Activated B cell treated with CpG ODN at 0.5 μM for 24 hours (primary cell): ENCODE measurements at regions of chr1 and their contacts with region 1.

Region 1: DNA sequence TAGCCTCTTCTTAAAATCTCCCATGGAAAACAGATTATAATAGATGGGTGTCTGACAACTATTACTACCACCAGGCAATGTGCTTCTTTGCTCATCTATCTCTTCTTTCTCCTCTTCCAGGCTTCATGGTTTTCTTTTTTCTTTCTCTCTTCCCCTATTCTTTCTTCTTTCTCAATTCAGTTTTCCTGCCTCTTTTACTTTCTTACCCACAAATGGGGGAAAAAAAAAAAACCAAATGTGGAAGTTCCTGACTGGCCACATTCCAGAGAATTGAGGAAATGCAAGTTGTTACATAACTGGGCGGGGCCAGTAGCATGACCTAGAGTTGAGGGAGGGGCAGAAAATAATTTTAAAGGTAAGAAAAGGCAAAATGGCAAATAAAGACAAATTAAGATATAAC is 10.9 kb upstream of the SMG7 start:
- DNase-seq: no peak
- ATAC-seq: no peak
- H3K4me3 Mint-ChIP-seq: no peak overlapping the region
- H3K27ac Mint-ChIP-seq: no peak overlapping the region
- H3K4me1 Mint-ChIP-seq: no peaks in the 10 kb centered on the region
- H3K27me3 Mint-ChIP-seq: peaks cover 30% of the 10 kb centered on the region
- CTCF ChIP-seq: no peak

Region 2: GRCh38 chr1:183487674-183488442 is 26.5 kb after region 1 on chr1:
- CTCF ChIA-PET with region 1: no interaction called
- POLR2A ChIA-PET with region 1: interaction called, 11 read pairs
- intact Hi-C with region 1: no loop called
- DNase-seq: no peak
- ATAC-seq: no peak
- H3K4me3 Mint-ChIP-seq: peak overlapping the region; percentile 11
- H3K27ac Mint-ChIP-seq: no peak overlapping the region
- H3K4me1 Mint-ChIP-seq: peaks cover 54% of the 10 kb centered on the region
- H3K27me3 Mint-ChIP-seq: no peaks in the 10 kb centered on the region
- CTCF ChIP-seq: no peak

Region 3: DNA sequence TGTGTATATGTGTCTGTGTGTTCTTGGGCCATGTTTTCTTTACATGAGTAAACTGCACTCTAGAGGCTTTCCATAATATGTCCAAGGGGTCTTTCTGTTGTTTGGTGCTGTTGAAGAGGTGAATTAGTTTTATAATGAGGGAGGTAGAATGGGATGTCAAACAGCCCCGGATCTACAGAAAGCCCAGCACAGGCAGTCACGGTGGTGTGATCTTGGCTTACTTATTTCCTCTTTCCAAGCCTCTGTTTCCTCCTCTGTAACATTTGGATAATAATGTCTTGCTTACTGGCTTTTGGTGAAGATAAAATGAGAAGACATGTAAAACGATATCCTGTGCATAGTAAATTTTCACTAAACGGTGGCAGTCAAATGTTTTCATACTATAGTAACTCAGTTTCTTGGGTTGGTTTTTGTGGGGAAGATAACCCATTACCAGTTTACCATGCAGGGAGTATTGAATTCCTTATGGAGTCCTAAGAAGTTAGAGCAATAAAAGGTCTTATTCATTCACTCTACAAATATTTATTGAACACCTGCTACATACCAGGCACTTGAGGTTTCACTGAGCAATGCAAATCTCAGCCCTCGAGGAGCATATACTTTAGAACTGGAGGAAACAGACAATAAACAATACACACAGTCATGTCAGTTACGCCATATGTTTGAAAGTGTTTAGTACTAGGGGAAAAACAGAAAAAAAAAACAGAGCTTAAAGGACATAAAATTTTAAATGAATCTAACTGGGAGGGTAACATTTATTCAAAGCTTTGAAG is 957.8 kb after region 1 on chr1:
- CTCF ChIA-PET with region 1: no interaction called
- POLR2A ChIA-PET with region 1: no interaction called
- intact Hi-C with region 1: no loop called
- DNase-seq: no peak
- ATAC-seq: no peak
- H3K4me3 Mint-ChIP-seq: no peak overlapping the region
- H3K27ac Mint-ChIP-seq: no peak overlapping the region
- H3K4me1 Mint-ChIP-seq: peaks cover 5% of the 10 kb centered on the region
- H3K27me3 Mint-ChIP-seq: peaks cover 5% of the 10 kb centered on the region
- CTCF ChIP-seq: no peak